Panc1 (cell line): ENCODE measurements at regions of chr15 and their contacts with region 1.

Region 1: DNA sequence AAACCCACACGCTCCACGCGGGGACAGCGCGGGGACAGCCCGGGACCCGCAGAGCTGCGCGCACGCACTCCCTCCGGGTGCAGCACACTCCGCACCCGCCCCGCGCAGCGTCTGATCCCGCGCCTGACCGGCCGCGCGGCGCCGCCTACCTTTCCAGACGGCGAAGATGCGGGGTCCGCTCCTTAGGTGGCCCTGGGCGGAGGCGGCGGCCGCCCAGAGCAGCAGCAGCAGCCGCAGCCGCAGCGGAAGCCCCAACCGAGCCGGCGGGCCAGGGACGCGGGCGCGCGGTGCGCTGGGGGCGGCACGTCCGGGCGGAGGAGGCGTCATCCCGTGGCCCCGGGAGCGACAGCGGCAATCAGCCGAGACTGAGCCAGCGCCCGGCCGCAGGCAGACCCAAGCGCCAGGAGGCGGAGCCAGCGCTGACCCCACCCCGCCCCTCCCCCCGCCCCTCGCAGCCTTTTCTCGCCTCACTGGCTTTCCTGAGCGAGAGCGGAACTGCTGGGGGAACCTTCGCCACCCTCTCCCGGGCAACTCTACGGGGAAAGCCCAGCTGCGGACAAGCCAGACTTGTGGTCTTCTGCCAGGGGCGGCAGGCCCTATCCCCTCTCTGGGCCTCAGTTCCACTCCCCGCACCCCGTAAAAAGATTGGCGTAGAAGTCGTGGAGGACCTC is at the start of gene SEMA7A:
- DNase-seq: no peak
- ATAC-seq: peak; percentile 92
- H3K4me3 ChIP-seq: peak within 1 kb of the TSS; percentile 71
- H3K27ac ChIP-seq: peak within 1 kb of the TSS; percentile 76
- H3K4me1 ChIP-seq: peaks cover 44% of the 10 kb centered on the region
- H3K27me3 ChIP-seq: no peaks in the 10 kb centered on the region
- CTCF ChIP-seq: no peak
- total RNA-seq, gene SEMA7A: 11.2 TPM

Region 2: DNA sequence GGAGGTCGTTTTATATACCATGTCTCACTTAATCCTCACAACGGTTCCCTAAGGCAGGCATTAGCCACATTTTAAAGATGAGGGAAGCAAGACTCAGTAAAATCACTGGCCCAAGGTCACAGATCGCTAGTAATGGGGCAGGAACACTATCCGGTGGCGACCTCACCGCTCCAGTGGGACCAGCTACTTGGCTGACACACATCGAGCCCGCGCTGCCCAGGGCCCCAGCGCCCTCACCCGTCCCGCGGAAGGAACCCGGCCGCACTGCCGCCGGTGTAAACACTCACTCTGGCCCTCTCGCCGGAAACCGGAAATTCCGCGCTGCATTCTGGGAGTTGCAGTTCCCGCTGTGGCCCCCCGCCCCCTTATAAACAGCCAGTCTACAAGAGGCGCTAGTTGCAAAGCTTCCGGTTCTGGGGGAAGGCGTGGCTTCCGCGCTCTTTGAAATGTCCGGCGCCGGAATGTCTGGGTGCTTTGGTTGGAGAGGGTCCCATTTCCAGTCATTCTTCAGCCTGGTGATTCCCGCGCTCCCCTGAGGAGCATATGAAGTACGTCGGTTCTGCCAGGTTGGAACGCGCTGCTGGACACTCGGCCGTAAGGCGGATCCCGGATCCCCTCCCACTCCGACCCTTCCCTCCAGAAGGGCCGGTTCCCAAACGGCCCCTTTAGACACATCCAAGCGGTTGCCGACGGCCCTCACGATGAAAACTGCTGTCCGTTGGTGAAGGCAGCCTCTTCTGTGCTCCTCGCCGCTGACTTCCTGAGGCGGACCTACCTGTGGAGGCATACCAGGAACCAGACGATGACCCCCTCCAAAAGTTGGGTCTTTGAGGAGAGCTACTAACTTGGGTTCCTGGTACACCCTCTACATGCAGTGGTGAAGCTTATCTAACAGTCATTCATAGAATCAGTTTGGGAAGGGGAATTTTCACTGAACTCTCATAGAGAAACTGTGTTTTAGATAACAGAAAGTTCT is 27.4 kb after region 1 on chr15 and contains the start of gene UBL7:
- CTCF ChIA-PET with region 1: interaction called, 4 read pairs
- POLR2A ChIA-PET with region 1: no interaction called
- in situ Hi-C with region 1: no loop called
- intact Hi-C with region 1: loop called (anchors 2 kb)
- DNase-seq: peak; percentile 78
- ATAC-seq: peak; percentile 98
- H3K4me3 ChIP-seq: peak within 1 kb of the TSS; percentile 74 to 78
- H3K27ac ChIP-seq: peak within 1 kb of the TSS; percentile 91
- H3K4me1 ChIP-seq: 0 out of 2 replicates have a peak, but pooled peaks cover 3% of the 10 kb centered on the region
- H3K27me3 ChIP-seq: no peaks in the 10 kb centered on the region
- CTCF ChIP-seq: no peak; the same call in 1 of the 2 replicates
- total RNA-seq, gene UBL7: 68.5 TPM

Region 3: GRCh38 chr15:74799856-74800547 is 366.3 kb after region 1 on chr15:
- CTCF ChIA-PET with region 1: interaction called, 15 read pairs
- POLR2A ChIA-PET with region 1: no interaction called
- in situ Hi-C with region 1: no loop called
- intact Hi-C with region 1: no loop called
- DNase-seq: peak; percentile 45
- ATAC-seq: peak; percentile 95
- H3K4me3 ChIP-seq: no peak overlapping the region
- H3K27ac ChIP-seq: no peak overlapping the region
- H3K4me1 ChIP-seq: peaks cover 7% of the 10 kb centered on the region; the same call in 1 of the 2 replicates
- H3K27me3 ChIP-seq: no peaks in the 10 kb centered on the region
- CTCF ChIP-seq: peak; percentile 99